Left lung (tissue), 14 donors: ENCODE measurements at regions of chr11 and their contacts with region 1.

Region 1: GRCh38 chr11:15208378-15209222 is 93.9 kb downstream of the INSC start:
- DNase-seq: peak; percentile 64 to 91 (median 82)
- ATAC-seq: peak; percentile 99
- H3K4me3 ChIP-seq: no peak overlapping the region
- H3K27ac ChIP-seq: no peak overlapping the region
- H3K4me1 ChIP-seq: no peaks in the 10 kb centered on the region
- H3K27me3 ChIP-seq: no peaks in the 10 kb centered on the region
- CTCF ChIP-seq: peak; percentile 91 to 94

Region 2: GRCh38 chr11:15101072-15101709 is 107.4 kb before region 1 on chr11:
- intact Hi-C with region 1: loop called (anchors 5 to 10 kb)
- DNase-seq: peak; percentile 52 to 77 (median 68)
- ATAC-seq: peak; percentile 97
- H3K4me3 ChIP-seq: no peak overlapping the region
- H3K27ac ChIP-seq: no peak overlapping the region
- H3K4me1 ChIP-seq: no peaks in the 10 kb centered on the region
- H3K27me3 ChIP-seq: no peaks in the 10 kb centered on the region
- CTCF ChIP-seq: peak; percentile 88 to 93